ENCODE measurements at regions of chr9 and their contacts with region 1.

Region 1: GRCh38 chr9:33721674-33722358 is 73.5 kb upstream of the PRSS3 start:
- DNase-seq: no peak
- H3K4me3 ChIP-seq: no peak overlapping the region
- H3K27me3 ChIP-seq: peaks cover 11% of the 10 kb centered on the region
- CTCF ChIP-seq: peak; percentile 100

Region 2: GRCh38 chr9:33703430-33704102 is 18.2 kb before region 1 on chr9:
- CTCF ChIA-PET with region 1: interaction called, 10 read pairs
- POLR2A ChIA-PET with region 1: no interaction called
- DNase-seq: no peak
- H3K4me3 ChIP-seq: no peak overlapping the region
- H3K27me3 ChIP-seq: peaks cover 7% of the 10 kb centered on the region
- CTCF ChIP-seq: no peak

Region 3: GRCh38 chr9:33762343-33762742 is 40.5 kb after region 1 on chr9:
- CTCF ChIA-PET with region 1: no interaction called
- POLR2A ChIA-PET with region 1: no interaction called
- DNase-seq: no peak
- H3K4me3 ChIP-seq: no peak overlapping the region
- H3K27me3 ChIP-seq: no peaks in the 10 kb centered on the region
- CTCF ChIP-seq: no peak

Measured in BJ (cell line).